ENCODE measurements at regions of chr2 and their contacts with region 1.

Region 1: DNA sequence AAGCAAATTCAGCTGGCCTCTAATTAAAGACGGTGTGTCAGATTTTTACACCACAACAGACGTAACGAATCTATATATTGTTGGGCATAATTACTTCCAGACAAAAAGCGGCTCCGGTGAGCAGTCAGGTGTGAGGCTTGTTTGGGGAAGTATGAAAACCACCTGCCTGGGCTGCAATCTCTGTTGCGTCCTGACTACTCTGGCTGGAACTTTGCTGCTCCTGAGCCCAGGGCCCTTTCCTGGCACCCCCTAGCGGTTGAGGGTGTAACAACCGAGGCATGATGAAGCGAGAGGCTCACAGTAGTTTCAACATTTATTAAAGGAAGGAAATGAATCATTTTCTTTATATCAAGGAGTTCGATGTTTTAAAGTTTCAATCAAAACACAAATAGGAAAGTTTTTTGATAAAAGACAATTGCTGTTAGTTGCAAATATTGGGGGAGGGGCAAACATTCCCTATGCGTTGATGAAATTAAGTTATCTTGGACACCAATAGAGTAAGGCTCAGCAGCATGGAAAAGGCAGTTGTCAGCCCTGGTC is 10.6 kb upstream of the ITGB6 start:
- DNase-seq: peak; percentile 52
- H3K4me3 ChIP-seq: no peak overlapping the region
- H3K27ac ChIP-seq: peak overlapping the region; percentile 95 to 97; a peak in 3 of 4 replicates
- H3K4me1 ChIP-seq: peaks cover 19 to 64% of the 10 kb centered on the region in 2 experiments
- H3K27me3 ChIP-seq: no peaks in the 10 kb centered on the region
- CTCF ChIP-seq: peak; percentile 81
- EP300 ChIP-seq: no peak
- RAD21 ChIP-seq: peak; percentile 61

Region 2: DNA sequence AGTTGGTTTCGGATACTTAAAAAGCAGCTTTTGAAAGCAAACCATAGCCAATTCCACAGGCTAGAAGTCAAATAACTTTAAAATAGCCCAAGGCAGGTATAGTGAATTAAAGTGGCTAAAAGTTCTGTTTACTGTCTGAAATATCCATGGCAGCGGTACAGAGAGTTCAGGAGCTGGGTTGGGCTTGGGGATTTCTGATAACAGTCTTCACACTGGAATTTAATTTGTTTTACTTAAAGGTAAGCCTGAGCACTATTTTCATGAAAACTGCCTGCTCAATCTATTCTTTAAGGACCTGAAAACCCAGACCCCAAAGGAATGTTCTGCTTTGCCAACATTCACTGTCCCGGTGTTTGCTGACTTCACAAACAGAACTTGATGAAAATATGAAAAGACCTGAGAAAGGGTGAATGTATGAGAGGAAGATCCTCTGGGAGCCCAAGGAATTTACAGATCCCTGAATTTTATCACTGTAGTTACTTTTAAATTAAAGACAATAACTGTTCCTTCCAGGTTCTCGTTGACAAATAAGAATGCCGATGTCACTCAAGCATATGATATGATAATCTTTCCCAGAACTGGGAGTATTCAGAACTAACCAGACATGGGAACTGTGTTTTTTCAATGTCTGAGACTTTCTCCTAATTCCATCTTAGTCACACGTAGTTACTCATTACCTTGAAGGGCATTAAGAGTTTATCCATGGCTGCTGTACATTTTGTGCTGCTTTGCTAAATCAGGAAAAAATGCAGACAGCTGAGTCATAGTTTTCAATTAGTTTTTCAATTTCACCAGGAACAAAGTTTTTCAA is 17.6 kb after region 1 on chr2:
- CTCF ChIA-PET with region 1: interaction called, 10 read pairs
- POLR2A ChIA-PET with region 1: no interaction called
- DNase-seq: no peak
- H3K4me3 ChIP-seq: no peak overlapping the region
- H3K27ac ChIP-seq: peak overlapping the region; percentile 96 to 98
- H3K4me1 ChIP-seq: peaks cover 36 to 63% of the 10 kb centered on the region in 2 experiments
- H3K27me3 ChIP-seq: no peaks in the 10 kb centered on the region
- CTCF ChIP-seq: no peak
- EP300 ChIP-seq: peak; percentile 57 to 95
- RAD21 ChIP-seq: no peak

Region 3: DNA sequence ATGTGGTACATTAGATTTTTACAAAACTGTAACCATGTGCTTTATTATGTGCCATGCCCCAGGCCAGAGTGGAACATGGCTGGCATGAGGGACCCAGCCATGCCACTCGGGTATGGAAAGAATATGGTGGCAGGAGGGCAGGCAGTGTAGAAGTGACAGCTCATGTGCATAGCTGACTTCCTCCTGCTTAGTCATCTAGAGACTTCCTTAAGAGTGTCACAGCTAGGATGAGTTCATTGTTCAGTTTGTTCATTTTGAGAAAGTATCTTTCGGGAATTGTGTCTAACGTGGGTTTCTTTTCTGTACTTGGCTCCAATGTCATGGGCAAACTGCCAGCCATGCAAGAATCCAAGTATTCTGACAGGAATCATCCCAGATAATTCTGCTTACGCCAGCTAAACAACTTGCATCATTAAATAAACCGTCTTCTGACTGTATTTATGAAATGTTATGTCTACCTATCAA is 83.7 kb after region 1 on chr2:
- CTCF ChIA-PET with region 1: no interaction called
- POLR2A ChIA-PET with region 1: no interaction called
- DNase-seq: no peak
- H3K4me3 ChIP-seq: no peak overlapping the region
- H3K27ac ChIP-seq: peak overlapping the region; percentile 77 to 89
- H3K4me1 ChIP-seq: peaks cover 21 to 31% of the 10 kb centered on the region in 2 experiments
- H3K27me3 ChIP-seq: no peaks in the 10 kb centered on the region
- CTCF ChIP-seq: no peak
- EP300 ChIP-seq: no peak; a peak in 1 of 4 replicates
- RAD21 ChIP-seq: no peak

Measured in SK-N-SH (cell line).